CD4-positive, alpha-beta memory T cell (primary cell): ENCODE measurements at regions of chr17 and their contacts with region 1.

Region 1: GRCh38 chr17:27805520-27806146 is 5.3 kb upstream of the NOS2 start:
- DNase-seq: peak; percentile 80 to 84 (median 82)
- H3K4me3 ChIP-seq: peak overlapping the region; percentile 5 to 63
- H3K4me3 Mint-ChIP-seq: peak overlapping the region; percentile 82 to 94 (median 86)
- H3K27ac ChIP-seq: peak overlapping the region; percentile 56
- H3K27ac Mint-ChIP-seq: peak overlapping the region; percentile 87 to 98 (median 93)
- H3K4me1 ChIP-seq: peaks cover 36% of the 10 kb centered on the region
- H3K4me1 Mint-ChIP-seq: peaks cover 21 to 46% (median 37%) of the 10 kb centered on the region in 4 donors
- H3K27me3 ChIP-seq: no peaks in the 10 kb centered on the region
- H3K27me3 Mint-ChIP-seq: no peaks in the 10 kb centered on the region

Region 2: GRCh38 chr17:27654654-27655524 is 150.7 kb before region 1 on chr17:
- CTCF ChIA-PET with region 1: no interaction called
- POLR2A ChIA-PET with region 1: no interaction called
- intact Hi-C with region 1: no loop called
- DNase-seq: peak; percentile 39 to 57 (median 47)
- H3K4me3 ChIP-seq: no peak overlapping the region
- H3K4me3 Mint-ChIP-seq: peak overlapping the region in 1 of 8 donors; percentile 8
- H3K27ac ChIP-seq: no peak overlapping the region
- H3K27ac Mint-ChIP-seq: no peak overlapping the region
- H3K4me1 ChIP-seq: peaks cover 6% of the 10 kb centered on the region
- H3K4me1 Mint-ChIP-seq: peaks cover 0 to 12% (median 7%) of the 10 kb centered on the region in 4 donors
- H3K27me3 ChIP-seq: no peaks in the 10 kb centered on the region
- H3K27me3 Mint-ChIP-seq: peaks cover 0 to 6% of the 10 kb centered on the region in 2 donors

Region 3: GRCh38 chr17:27747462-27748359 is 57.9 kb before region 1 on chr17:
- CTCF ChIA-PET with region 1: no interaction called
- POLR2A ChIA-PET with region 1: no interaction called
- intact Hi-C with region 1: no loop called
- DNase-seq: no peak
- H3K4me3 ChIP-seq: no peak overlapping the region
- H3K4me3 Mint-ChIP-seq: no peak overlapping the region
- H3K27ac ChIP-seq: no peak overlapping the region
- H3K27ac Mint-ChIP-seq: no peak overlapping the region
- H3K4me1 ChIP-seq: no peaks in the 10 kb centered on the region
- H3K4me1 Mint-ChIP-seq: no peaks in the 10 kb centered on the region
- H3K27me3 ChIP-seq: no peaks in the 10 kb centered on the region
- H3K27me3 Mint-ChIP-seq: no peaks in the 10 kb centered on the region

Region 4: GRCh38 chr17:27818401-27819105 is 12.9 kb after region 1 on chr17:
- CTCF ChIA-PET with region 1: interaction called, 11 read pairs
- POLR2A ChIA-PET with region 1: no interaction called
- intact Hi-C with region 1: no loop called
- DNase-seq: no peak
- H3K4me3 ChIP-seq: no peak overlapping the region
- H3K4me3 Mint-ChIP-seq: no peak overlapping the region
- H3K27ac ChIP-seq: no peak overlapping the region
- H3K27ac Mint-ChIP-seq: no peak overlapping the region
- H3K4me1 ChIP-seq: no peaks in the 10 kb centered on the region
- H3K4me1 Mint-ChIP-seq: no peaks in the 10 kb centered on the region
- H3K27me3 ChIP-seq: no peaks in the 10 kb centered on the region
- H3K27me3 Mint-ChIP-seq: peaks cover 0 to 2% of the 10 kb centered on the region in 2 donors

Region 5: DNA sequence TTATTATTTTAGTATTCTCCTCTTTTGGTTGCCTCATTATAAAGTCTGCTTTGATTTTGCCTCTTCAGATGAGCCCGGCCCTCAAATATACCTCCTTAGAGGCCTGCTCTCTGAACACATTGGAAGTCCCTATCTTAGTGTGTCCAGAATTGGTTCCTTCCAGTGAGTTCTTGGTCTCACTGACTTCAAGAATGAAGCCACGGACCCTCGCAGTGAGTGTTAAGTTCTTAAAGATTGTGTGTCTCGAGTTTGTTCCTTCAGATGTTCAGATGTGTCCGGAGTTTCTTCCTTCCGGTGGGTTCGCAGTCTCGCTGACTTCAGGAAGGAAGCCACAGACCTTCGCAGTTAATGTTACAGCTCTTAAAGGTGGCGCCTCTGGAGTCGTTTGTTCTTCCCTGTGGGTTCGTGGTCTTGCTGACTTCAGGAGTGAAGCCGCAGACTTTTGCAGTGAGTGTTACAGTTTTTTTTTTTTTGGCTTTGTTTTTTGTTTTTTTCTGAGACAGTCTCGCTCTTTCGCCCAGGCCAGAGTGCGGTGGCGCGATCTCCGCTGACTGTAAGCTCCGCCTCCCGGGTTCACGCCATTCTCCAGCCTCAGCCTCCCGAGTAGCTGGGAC is 40.5 kb after region 1 on chr17:
- CTCF ChIA-PET with region 1: interaction called, 22 read pairs
- POLR2A ChIA-PET with region 1: interaction called, 17 read pairs
- intact Hi-C with region 1: no loop called
- DNase-seq: peak; percentile 21 to 61 (median 34)
- H3K4me3 ChIP-seq: peak overlapping the region in 1 of 2 donors; percentile 23
- H3K4me3 Mint-ChIP-seq: peak overlapping the region; percentile 57 to 86 (median 82)
- H3K27ac ChIP-seq: peak overlapping the region; percentile 18
- H3K27ac Mint-ChIP-seq: peak overlapping the region; percentile 35 to 93 (median 88)
- H3K4me1 ChIP-seq: peaks cover 13% of the 10 kb centered on the region
- H3K4me1 Mint-ChIP-seq: peaks cover 11 to 28% (median 19%) of the 10 kb centered on the region in 4 donors
- H3K27me3 ChIP-seq: no peaks in the 10 kb centered on the region
- H3K27me3 Mint-ChIP-seq: no peaks in the 10 kb centered on the region

Region 6: GRCh38 chr17:27892866-27893769 is 87.5 kb after region 1 on chr17 and contains the start of gene LYRM9:
- CTCF ChIA-PET with region 1: interaction called, 273 read pairs
- POLR2A ChIA-PET with region 1: interaction called, 153 read pairs
- intact Hi-C with region 1: loop called (anchors 1 kb)
- DNase-seq: peak; percentile 85 to 96 (median 92)
- H3K4me3 ChIP-seq: peak within 1 kb of the TSS; percentile 24 to 58
- H3K4me3 Mint-ChIP-seq: peak within 1 kb of the TSS; percentile 83 to 93 (median 90)
- H3K27ac ChIP-seq: peak within 1 kb of the TSS; percentile 61
- H3K27ac Mint-ChIP-seq: peak within 1 kb of the TSS; percentile 73 to 90 (median 85)
- H3K4me1 ChIP-seq: peaks cover 14% of the 10 kb centered on the region
- H3K4me1 Mint-ChIP-seq: peaks cover 4 to 16% (median 12%) of the 10 kb centered on the region in 4 donors
- H3K27me3 ChIP-seq: peaks cover 3% of the 10 kb centered on the region
- H3K27me3 Mint-ChIP-seq: peaks cover 12 to 18% of the 10 kb centered on the region in 2 donors
- total RNA-seq, gene LYRM9: 16.6 to 18.8 TPM

Region 7: GRCh38 chr17:28252436-28252835 is 446.8 kb after region 1 on chr17:
- CTCF ChIA-PET with region 1: interaction called, 75 read pairs
- POLR2A ChIA-PET with region 1: interaction called, 6 read pairs
- intact Hi-C with region 1: no loop called
- DNase-seq: no peak
- H3K4me3 ChIP-seq: no peak overlapping the region
- H3K4me3 Mint-ChIP-seq: peak overlapping the region in 3 of 8 donors; percentile 30 to 48 (median 38)
- H3K27ac ChIP-seq: no peak overlapping the region
- H3K27ac Mint-ChIP-seq: no peak overlapping the region
- H3K4me1 ChIP-seq: peaks cover 8% of the 10 kb centered on the region
- H3K4me1 Mint-ChIP-seq: peaks cover 5 to 8% (median 7%) of the 10 kb centered on the region in 4 donors
- H3K27me3 ChIP-seq: peaks cover 6% of the 10 kb centered on the region
- H3K27me3 Mint-ChIP-seq: peaks cover 5 to 6% of the 10 kb centered on the region in 2 donors